ENCODE measurements at regions of chr20 and their contacts with region 1.

Region 1: DNA sequence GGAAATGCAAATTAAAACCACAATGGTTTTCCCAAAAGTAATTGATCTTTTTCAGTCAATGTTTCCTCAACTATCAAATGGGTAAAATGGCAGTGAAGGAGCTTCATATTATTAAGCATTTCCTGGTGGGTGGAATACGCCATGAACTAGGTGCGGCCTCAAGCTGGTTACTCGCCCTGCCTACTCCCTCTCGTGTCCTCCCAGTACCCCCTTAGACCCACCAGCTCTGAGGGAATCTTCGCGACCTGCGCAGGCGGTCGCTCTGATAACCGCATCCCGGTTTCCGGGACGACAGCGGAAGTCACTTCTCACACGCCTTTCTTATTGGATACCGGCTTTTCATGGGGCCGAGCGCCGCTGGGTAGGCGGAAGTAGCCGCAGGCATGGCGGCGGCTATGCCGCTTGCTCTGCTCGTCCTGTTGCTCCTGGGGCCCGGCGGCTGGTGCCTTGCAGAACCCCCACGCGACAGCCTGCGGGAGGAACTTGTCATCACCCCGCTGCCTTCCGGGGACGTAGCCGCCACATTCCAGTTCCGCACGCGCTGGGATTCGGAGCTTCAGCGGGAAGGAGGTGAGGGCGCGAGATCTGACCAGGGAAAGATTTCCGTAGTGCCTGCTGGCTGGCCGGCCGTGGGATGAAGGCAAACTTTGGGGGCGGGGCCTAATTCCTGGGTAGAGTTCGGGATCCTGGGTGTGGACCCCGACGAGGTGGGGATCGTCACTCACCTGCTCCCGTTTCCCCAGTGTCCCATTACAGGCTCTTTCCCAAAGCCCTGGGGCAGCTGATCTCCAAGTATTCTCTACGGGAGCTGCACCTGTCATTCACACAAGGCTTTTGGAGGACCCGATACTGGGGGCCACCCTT is at the start of gene PIGT:
- DNase-seq: peak; percentile 80 to 96 (median 94)
- ATAC-seq: peak; percentile 97
- H3K4me3 Mint-ChIP-seq: peak within 1 kb of the TSS; percentile 90 to 99 (median 96)
- H3K27ac Mint-ChIP-seq: peak within 1 kb of the TSS; percentile 98 to 100 (median 99)
- H3K4me1 Mint-ChIP-seq: peaks cover 26 to 46% (median 38%) of the 10 kb centered on the region in 4 donors
- H3K27me3 Mint-ChIP-seq: no peaks in the 10 kb centered on the region
- polyA plus RNA-seq, gene PIGT: 73.4 to 90.6 (median 73.9) TPM

Region 2: DNA sequence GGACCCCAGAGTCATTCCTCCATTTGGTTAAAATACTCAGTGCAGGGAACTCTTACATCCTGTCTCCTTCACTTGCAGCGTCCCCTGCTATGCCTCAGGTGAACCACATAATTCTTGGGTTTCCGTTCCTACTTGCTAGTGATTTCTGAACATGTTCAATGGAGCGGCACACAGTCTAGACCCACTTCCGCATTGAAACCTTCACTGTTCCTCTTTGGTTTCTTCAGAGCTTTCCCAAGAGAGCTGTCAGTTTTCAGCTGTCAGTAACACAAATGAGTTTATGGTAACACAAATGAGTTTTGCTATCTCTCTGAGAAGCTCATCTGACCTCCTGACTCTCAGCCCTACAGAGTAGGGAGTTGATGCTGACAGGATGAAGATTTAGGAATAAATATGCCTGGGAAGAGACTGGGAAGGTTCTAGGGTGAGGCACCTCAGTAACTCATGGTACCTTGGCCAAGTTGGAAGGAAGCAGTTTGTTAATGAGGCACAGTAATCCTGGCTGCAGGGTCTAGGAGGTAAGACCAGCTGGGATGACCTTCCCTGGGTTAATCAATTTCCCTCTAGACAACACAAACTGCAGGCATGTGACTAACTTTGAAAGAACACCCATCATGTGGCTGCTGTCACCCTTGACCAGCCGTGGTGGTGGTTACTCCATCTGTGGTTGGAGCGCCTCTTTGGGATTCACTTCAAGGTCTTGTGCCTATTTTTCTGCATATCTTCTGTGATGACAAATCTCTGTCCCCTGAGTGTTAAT is 47.6 kb before region 1 on chr20:
- POLR2A ChIA-PET with region 1: interaction called, 40 read pairs
- DNase-seq: peak in 7 of 10 donors; percentile 19 to 57 (median 38)
- ATAC-seq: peak; percentile 49 to 60
- H3K4me3 Mint-ChIP-seq: peak overlapping the region; percentile 28 to 80 (median 70)
- H3K27ac Mint-ChIP-seq: peak overlapping the region in 9 of 10 donors; percentile 75 to 91 (median 83)
- H3K4me1 Mint-ChIP-seq: peaks cover 30 to 80% (median 75%) of the 10 kb centered on the region in 4 donors
- H3K27me3 Mint-ChIP-seq: no peaks in the 10 kb centered on the region

Region 3: DNA sequence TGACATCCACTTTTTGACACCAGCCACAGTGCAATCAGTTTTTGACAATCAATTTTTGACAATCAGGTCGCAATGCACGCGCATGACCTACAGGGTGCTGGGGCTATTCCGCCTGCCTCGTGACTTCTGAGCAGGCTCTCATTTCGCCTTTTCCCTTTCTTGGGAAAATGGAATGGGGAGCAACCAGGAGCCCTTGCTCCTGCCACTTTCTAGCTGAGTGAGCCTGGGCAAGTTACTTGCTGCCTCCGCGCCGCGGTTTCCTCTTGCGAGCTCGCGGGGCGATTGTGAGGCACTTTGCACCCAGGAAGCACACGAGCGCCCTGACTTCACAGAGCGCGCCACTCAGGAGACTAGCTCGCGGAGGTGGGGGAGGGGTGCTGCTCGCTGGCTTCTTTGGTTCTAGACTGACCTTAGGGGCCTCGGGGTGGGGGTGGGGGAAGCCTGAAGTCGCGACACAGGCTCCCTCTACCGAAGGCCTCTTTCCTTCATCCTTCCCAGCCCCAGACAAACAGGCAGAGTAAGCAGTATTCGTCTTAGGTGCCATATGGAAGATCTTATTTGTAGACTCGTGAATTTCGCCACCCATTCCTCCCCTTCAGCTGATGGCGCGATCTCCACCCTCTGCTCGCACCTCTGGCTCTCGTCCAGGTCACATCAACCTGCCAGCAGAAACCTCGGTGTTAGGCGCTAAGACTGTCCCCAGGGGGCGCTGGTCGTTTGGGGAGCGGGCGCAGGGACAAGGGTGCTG is 42.5 kb before region 1 on chr20:
- POLR2A ChIA-PET with region 1: interaction called, 40 read pairs
- DNase-seq: peak; percentile 83 to 94 (median 88)
- ATAC-seq: peak; percentile 89 to 90
- H3K4me3 Mint-ChIP-seq: peak overlapping the region; percentile 86 to 96 (median 90)
- H3K27ac Mint-ChIP-seq: peak overlapping the region; percentile 79 to 98 (median 96)
- H3K4me1 Mint-ChIP-seq: peaks cover 10 to 46% (median 39%) of the 10 kb centered on the region in 4 donors
- H3K27me3 Mint-ChIP-seq: no peaks in the 10 kb centered on the region

Region 4: DNA sequence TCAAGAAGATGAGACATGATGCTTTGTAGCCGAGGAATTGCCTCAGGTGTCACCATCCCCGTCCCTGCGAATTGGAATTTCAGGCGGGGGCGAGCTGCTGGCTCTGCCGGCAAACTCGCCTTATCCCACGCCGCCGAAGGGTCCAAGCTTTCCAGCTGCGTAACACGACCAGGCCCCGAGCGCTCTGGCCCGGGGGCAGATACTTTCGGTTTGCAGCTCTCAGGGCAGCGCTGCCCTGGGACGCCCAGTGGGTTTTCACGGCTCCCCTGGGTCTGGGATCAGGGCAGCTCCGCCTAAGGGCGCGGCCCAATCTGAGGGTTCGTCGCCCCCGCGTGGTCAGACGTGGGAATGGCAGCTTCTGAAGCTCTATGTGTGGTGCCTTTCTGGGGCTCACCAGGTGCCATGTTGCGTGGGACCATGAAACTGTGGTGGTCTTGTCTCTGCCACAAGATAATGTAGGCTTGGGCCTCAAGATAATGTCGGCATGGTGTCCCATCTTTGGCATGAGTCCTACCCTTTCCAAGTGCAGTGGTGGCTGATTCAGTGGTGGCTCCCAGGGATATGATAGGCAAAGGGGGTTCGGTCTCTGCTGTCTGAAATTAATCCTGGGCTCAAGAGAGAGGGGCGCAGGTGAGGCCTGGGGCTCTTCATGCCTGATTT is 20.9 kb after region 1 on chr20:
- POLR2A ChIA-PET with region 1: interaction called, 17 read pairs
- DNase-seq: peak; percentile 78 to 92 (median 86)
- ATAC-seq: peak; percentile 99 to 100
- H3K4me3 Mint-ChIP-seq: peak overlapping the region; percentile 75 to 88 (median 84)
- H3K27ac Mint-ChIP-seq: peak overlapping the region; percentile 22 to 86 (median 80)
- H3K4me1 Mint-ChIP-seq: peaks cover 5 to 23% (median 15%) of the 10 kb centered on the region in 4 donors
- H3K27me3 Mint-ChIP-seq: no peaks in the 10 kb centered on the region